Naive thymus-derived CD4-positive, alpha-beta T cell (primary cell): ENCODE measurements at regions of chr2 and their contacts with region 1.

Region 1: DNA sequence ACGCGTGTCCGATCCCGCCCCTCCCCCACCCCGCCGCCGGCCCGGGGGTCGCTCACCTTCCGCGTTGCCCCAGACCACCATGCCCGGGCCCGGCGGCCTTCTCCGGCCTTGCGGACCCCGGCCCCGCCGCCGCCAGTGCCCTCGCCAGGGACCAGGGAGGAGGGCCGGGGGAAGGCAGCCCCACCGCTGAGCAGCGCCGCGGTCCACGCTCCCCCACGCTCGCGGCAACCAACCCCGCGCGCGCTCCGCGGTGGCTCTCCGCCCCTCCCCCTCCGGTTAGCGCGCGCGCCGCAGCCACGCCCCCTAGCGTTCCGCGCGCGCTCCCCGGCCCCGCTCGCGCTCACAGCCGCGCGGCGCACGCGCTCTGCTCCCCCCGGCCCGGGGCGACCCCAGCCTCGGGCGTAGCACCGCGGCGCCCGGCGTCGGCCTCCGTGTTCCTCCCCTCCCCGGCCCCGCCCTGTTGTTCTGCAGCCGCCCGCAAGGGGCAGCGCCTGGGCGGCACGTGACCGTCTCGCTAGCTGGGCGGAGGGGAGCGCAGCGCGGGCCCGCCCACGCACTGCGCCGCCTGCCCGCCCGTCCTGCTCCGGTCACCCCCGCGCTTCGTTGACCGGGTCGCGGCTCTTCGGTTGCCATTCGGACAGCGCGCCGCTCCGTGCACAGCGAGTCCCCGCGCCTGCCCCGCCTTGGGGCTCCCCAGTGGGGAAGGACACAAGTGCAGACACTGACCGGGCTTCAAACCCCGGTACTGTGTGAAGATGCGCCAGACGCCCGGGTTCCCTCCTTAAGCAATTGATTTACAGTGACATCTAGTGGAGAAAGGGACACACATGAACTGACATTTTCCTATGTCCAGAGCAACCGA is at the start of gene REV1:
- DNase-seq: peak; percentile 92 to 99 (median 96)
- ATAC-seq: peak; percentile 92
- H3K4me3 ChIP-seq: peak within 1 kb of the TSS; percentile 96
- H3K4me3 Mint-ChIP-seq: peak within 1 kb of the TSS; percentile 93 to 100 (median 97)
- H3K27ac ChIP-seq: peak within 1 kb of the TSS; percentile 83
- H3K27ac Mint-ChIP-seq: peak within 1 kb of the TSS; percentile 96 to 100 (median 99)
- H3K4me1 ChIP-seq: peaks cover 0 to 14% of the 10 kb centered on the region in 2 donors
- H3K4me1 Mint-ChIP-seq: peaks cover 27 to 45% (median 39%) of the 10 kb centered on the region in 7 donors
- H3K27me3 ChIP-seq: no peaks in the 10 kb centered on the region
- H3K27me3 Mint-ChIP-seq: no peaks in the 10 kb centered on the region
- total RNA-seq, gene REV1: 40.9 to 72.5 (median 54.7) TPM

Region 2: GRCh38 chr2:97663965-97664635 is 1825.9 kb before region 1 on chr2 and contains the start of gene ACTR1B:
- CTCF ChIA-PET with region 1: no interaction called
- POLR2A ChIA-PET with region 1: no interaction called
- intact Hi-C with region 1: loop called in 1 of 2 experiments (anchors 2 kb)
- DNase-seq: peak; percentile 95 to 99 (median 98)
- ATAC-seq: peak; percentile 92
- H3K4me3 ChIP-seq: peak within 1 kb of the TSS; percentile 89
- H3K4me3 Mint-ChIP-seq: peak within 1 kb of the TSS; percentile 93 to 99 (median 96)
- H3K27ac ChIP-seq: peak within 1 kb of the TSS; percentile 98
- H3K27ac Mint-ChIP-seq: peak within 1 kb of the TSS; percentile 96 to 99 (median 98)
- H3K4me1 ChIP-seq: peaks cover 16 to 25% of the 10 kb centered on the region in 2 donors
- H3K4me1 Mint-ChIP-seq: peaks cover 15 to 48% (median 36%) of the 10 kb centered on the region in 7 donors
- H3K27me3 ChIP-seq: no peaks in the 10 kb centered on the region
- H3K27me3 Mint-ChIP-seq: no peaks in the 10 kb centered on the region
- total RNA-seq, gene ACTR1B: 75.9 to 95.5 (median 89.5) TPM

Region 3: DNA sequence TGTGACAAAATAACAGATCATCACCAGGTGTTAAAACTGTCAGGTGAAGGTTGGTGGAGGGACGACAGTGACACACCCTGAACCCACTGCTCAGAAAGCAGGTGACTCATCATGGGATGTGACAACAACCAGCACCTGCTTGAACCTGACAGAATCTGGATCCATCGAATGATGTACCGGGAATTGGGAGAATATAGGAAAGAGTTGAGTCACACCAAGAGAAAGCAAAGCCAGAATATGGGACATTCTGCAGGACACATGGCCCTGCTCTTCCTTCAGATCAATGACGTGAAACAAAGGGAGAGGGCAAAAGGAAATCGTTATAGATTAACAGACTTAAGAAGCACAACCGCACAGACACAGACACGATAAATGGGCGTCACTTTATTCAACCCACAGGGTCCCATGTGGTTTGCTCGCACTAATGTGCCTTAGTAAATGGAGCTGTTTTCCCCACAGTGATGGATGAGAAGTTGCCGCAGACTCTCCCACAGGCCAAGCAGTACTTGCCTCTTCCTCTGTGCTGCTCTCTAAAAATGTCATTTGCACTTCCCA is 654.1 kb before region 1 on chr2:
- CTCF ChIA-PET with region 1: no interaction called
- POLR2A ChIA-PET with region 1: no interaction called
- intact Hi-C with region 1: loop called in 1 of 2 experiments (anchors 5 kb)
- DNase-seq: peak in 7 of 9 donors; percentile 55 to 78 (median 72)
- ATAC-seq: peak; percentile 87
- H3K4me3 ChIP-seq: peak overlapping the region; percentile 1
- H3K4me3 Mint-ChIP-seq: peak overlapping the region; percentile 32 to 79 (median 52)
- H3K27ac ChIP-seq: peak overlapping the region; percentile 66
- H3K27ac Mint-ChIP-seq: peak overlapping the region; percentile 78 to 98 (median 88)
- H3K4me1 ChIP-seq: peaks cover 16 to 43% of the 10 kb centered on the region in 2 donors
- H3K4me1 Mint-ChIP-seq: peaks cover 24 to 51% (median 28%) of the 10 kb centered on the region in 7 donors
- H3K27me3 ChIP-seq: no peaks in the 10 kb centered on the region
- H3K27me3 Mint-ChIP-seq: peaks cover 0 to 17% (median 0%) of the 10 kb centered on the region in 5 donors

Region 4: GRCh38 chr2:99085421-99085820 is 404.6 kb before region 1 on chr2:
- CTCF ChIA-PET with region 1: no interaction called
- POLR2A ChIA-PET with region 1: no interaction called
- intact Hi-C with region 1: loop called (anchors 1 to 5 kb)
- DNase-seq: peak in 4 of 9 donors; percentile 1 to 7 (median 4)
- ATAC-seq: no peak
- H3K4me3 ChIP-seq: no peak overlapping the region
- H3K4me3 Mint-ChIP-seq: no peak overlapping the region
- H3K27ac ChIP-seq: no peak overlapping the region
- H3K27ac Mint-ChIP-seq: no peak overlapping the region
- H3K4me1 ChIP-seq: peaks cover 0 to 7% of the 10 kb centered on the region in 2 donors
- H3K4me1 Mint-ChIP-seq: peaks cover 0 to 6% (median 4%) of the 10 kb centered on the region in 7 donors
- H3K27me3 ChIP-seq: no peaks in the 10 kb centered on the region
- H3K27me3 Mint-ChIP-seq: peaks cover 0 to 28% (median 6%) of the 10 kb centered on the region in 5 donors

Region 5: GRCh38 chr2:99154643-99155536 is 335.1 kb before region 1 on chr2 and contains the starts of genes LIPT1 and TSGA10:
- CTCF ChIA-PET with region 1: no interaction called
- POLR2A ChIA-PET with region 1: no interaction called
- intact Hi-C with region 1: loop called (anchors 1 to 10 kb)
- DNase-seq: peak; percentile 80 to 95 (median 92)
- ATAC-seq: peak; percentile 98
- H3K4me3 ChIP-seq: peak within 1 kb of the TSS; percentile 83
- H3K4me3 Mint-ChIP-seq: peak within 1 kb of the TSS in 1 of 10 donors; percentile 93
- H3K27ac ChIP-seq: peak within 1 kb of the TSS; percentile 92
- H3K27ac Mint-ChIP-seq: peak within 1 kb of the TSS in 2 of 9 donors; percentile 96 to 97
- H3K4me1 ChIP-seq: peaks cover 15 to 18% of the 10 kb centered on the region in 2 donors
- H3K4me1 Mint-ChIP-seq: peaks cover 25 to 57% (median 42%) of the 10 kb centered on the region in 7 donors
- H3K27me3 ChIP-seq: no peaks in the 10 kb centered on the region
- H3K27me3 Mint-ChIP-seq: no peaks in the 10 kb centered on the region
- total RNA-seq, gene LIPT1: 7.7 to 24.1 (median 15.9) TPM
- total RNA-seq, gene TSGA10: 3.5 to 31.7 (median 12.6) TPM

Region 6: GRCh38 chr2:99403524-99403923 is 86.5 kb before region 1 on chr2:
- CTCF ChIA-PET with region 1: no interaction called
- POLR2A ChIA-PET with region 1: no interaction called
- intact Hi-C with region 1: loop called in 1 of 2 experiments (anchors 1 kb)
- DNase-seq: no peak
- ATAC-seq: no peak
- H3K4me3 ChIP-seq: no peak overlapping the region
- H3K4me3 Mint-ChIP-seq: no peak overlapping the region
- H3K27ac ChIP-seq: peak overlapping the region; percentile 46
- H3K27ac Mint-ChIP-seq: peak overlapping the region; percentile 13 to 84 (median 78)
- H3K4me1 ChIP-seq: no peaks in the 10 kb centered on the region
- H3K4me1 Mint-ChIP-seq: peaks cover 4 to 20% (median 9%) of the 10 kb centered on the region in 7 donors
- H3K27me3 ChIP-seq: no peaks in the 10 kb centered on the region
- H3K27me3 Mint-ChIP-seq: no peaks in the 10 kb centered on the region

Region 7: GRCh38 chr2:99442837-99443236 is 47.2 kb before region 1 on chr2:
- CTCF ChIA-PET with region 1: no interaction called
- POLR2A ChIA-PET with region 1: no interaction called
- intact Hi-C with region 1: loop called in 1 of 2 experiments (anchors 1 kb)
- DNase-seq: peak in 1 of 9 donors; percentile 1
- ATAC-seq: no peak
- H3K4me3 ChIP-seq: no peak overlapping the region
- H3K4me3 Mint-ChIP-seq: no peak overlapping the region
- H3K27ac ChIP-seq: no peak overlapping the region
- H3K27ac Mint-ChIP-seq: no peak overlapping the region
- H3K4me1 ChIP-seq: no peaks in the 10 kb centered on the region
- H3K4me1 Mint-ChIP-seq: peaks cover 7 to 23% (median 14%) of the 10 kb centered on the region in 7 donors
- H3K27me3 ChIP-seq: no peaks in the 10 kb centered on the region
- H3K27me3 Mint-ChIP-seq: no peaks in the 10 kb centered on the region

Region 8: GRCh38 chr2:99507937-99508818 is 18.2 kb after region 1 on chr2:
- CTCF ChIA-PET with region 1: no interaction called
- POLR2A ChIA-PET with region 1: no interaction called
- intact Hi-C with region 1: no loop called
- DNase-seq: no peak
- ATAC-seq: no peak
- H3K4me3 ChIP-seq: no peak overlapping the region
- H3K4me3 Mint-ChIP-seq: no peak overlapping the region
- H3K27ac ChIP-seq: no peak overlapping the region
- H3K27ac Mint-ChIP-seq: no peak overlapping the region
- H3K4me1 ChIP-seq: no peaks in the 10 kb centered on the region
- H3K4me1 Mint-ChIP-seq: peaks cover 0 to 6% (median 0%) of the 10 kb centered on the region in 7 donors
- H3K27me3 ChIP-seq: no peaks in the 10 kb centered on the region
- H3K27me3 Mint-ChIP-seq: peaks cover 0 to 2% (median 0%) of the 10 kb centered on the region in 5 donors